ENCODE measurements at regions of chr1 and their contacts with region 1.

Region 1: DNA sequence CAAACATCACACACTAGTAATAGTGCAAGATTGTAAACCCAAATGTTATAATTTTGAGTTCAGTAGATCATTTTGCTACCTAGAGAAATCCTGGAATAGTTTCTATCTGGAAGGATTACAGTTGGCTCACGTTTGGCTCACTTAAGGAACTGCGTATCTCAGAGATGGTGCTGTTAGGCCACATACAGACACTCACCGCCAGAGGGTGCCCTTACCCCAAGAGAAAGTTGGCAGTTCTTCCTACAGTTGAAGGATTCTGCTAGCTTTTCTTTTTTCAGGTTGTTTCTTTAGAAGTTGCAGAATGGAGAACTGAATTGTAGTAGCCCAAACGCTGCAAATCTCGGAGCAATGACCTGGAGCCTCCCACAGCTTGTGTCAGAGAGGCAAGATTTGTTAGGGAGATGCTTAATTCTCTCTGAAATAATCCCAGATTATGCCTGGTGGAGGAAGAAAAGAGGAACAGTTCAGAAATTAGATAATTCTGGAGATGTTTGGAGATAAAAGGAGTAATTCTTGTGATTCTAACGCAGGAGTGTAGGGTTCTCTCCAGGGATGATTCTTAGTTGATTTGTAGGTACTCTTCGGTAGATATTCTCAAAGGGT is 87.9 kb upstream of the PAPPA2 start:
- DNase-seq: peak; percentile 71
- ATAC-seq: peak; percentile 73 to 76

Region 2: GRCh38 chr1:175717610-175718540 is 657.2 kb before region 1 on chr1:
- intact Hi-C with region 1: no loop called
- DNase-seq: no peak
- ATAC-seq: no peak

Region 3: DNA sequence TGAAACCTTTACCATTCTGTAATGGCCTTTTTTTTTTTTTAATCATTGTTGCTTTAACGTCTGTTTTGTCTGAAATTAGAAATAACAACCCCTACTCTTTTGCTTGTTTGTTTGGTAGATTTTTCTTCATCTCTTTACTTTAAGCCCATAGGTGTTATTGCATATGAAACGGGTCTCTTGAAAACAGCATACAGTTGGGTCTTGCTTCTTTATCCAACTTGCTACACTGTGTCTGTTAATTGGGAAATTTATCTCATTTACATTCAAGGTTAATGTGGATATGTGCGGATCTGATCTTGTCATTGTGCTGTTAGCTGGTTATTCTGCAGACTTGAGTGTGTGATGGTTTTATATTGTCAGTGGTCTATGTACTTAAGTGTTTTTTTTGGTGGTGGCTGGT is 89.1 kb before region 1 on chr1:
- intact Hi-C with region 1: no loop called
- DNase-seq: no peak
- ATAC-seq: no peak

Region 4: GRCh38 chr1:176843352-176844297 is 468.6 kb after region 1 on chr1:
- intact Hi-C with region 1: loop called (anchors 2 to 10 kb)
- DNase-seq: no peak
- ATAC-seq: peak; percentile 48 to 81

Region 5: DNA sequence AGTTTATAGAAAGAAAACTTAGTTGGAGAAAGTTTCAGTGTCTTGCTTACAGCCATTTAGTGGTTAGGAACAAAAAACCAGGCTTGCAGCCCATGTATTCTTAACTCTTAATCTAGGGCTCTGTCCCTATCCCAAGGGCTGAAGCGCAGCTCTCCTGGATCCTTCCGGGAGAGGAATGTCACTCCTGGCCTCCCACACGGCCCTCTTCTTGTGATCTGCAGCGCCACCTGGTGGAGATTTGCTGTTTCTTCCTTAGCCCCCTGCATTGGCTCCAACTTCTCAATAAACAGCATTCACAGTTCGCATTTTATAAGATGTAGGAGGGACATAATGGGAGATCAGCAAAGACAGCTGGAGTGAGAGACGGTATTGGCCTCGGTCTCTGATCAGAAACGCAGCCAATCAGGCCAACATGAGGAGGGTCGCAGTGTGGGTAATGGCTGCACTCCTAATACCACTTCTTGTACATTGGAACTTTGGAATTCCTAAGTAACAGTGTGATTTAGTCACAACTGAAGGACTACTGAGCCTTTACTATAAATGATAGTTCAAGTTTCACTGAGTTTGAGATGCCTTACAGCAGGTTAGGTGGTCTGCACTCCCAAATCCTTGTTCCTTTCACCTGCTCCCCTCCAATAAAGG is 506.0 kb after region 1 on chr1:
- intact Hi-C with region 1: loop called in 1 of 2 experiments (anchors 2 kb)
- DNase-seq: peak; percentile 70
- ATAC-seq: peak; percentile 88

Measured in left cardiac atrium (tissue), 4 donors.